ENCODE measurements at regions of chr15 and their contacts with region 1.

Region 1: DNA sequence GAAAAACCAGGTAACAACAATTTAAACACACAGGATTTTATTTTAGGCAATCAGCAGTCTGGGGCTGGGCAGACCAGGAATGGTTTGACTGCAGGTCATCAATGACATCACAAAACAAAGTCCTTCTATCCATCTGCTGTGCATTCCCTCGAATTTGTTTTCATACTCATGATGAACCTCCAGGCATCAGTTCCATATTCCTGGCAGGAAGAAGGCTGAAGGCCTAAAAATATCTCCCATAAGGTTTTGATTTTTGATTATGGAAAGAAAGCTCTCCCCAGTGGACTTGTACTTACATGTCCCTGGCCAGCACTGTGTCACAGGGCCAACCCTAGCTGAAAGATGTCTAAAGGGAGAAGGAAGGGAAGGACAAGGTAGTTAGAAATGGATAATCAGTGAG is 107.4 kb downstream of the PEAK1 start:
- DNase-seq: peak; percentile 51
- H3K4me3 ChIP-seq: no peak overlapping the region
- H3K27ac ChIP-seq: peak overlapping the region; percentile 60
- H3K4me1 ChIP-seq: peaks cover 16% of the 10 kb centered on the region
- H3K27me3 ChIP-seq: no peaks in the 10 kb centered on the region
- CTCF ChIP-seq: no peak

Region 2: GRCh38 chr15:77352887-77353286 is 40.4 kb after region 1 on chr15:
- CTCF ChIA-PET with region 1: no interaction called
- dilution Hi-C with region 1: no loop called
- in situ Hi-C with region 1: no loop called
- intact Hi-C with region 1: loop called (anchors 5 kb)
- DNase-seq: no peak
- H3K4me3 ChIP-seq: no peak overlapping the region
- H3K27ac ChIP-seq: no peak overlapping the region
- H3K4me1 ChIP-seq: peaks cover 9% of the 10 kb centered on the region
- H3K27me3 ChIP-seq: no peaks in the 10 kb centered on the region
- CTCF ChIP-seq: no peak

Region 3: GRCh38 chr15:77419836-77420609 is 107.5 kb after region 1 on chr15 and contains the start of gene PEAK1:
- CTCF ChIA-PET with region 1: no interaction called
- dilution Hi-C with region 1: no loop called
- in situ Hi-C with region 1: no loop called
- intact Hi-C with region 1: loop called (anchors 1 kb)
- DNase-seq: peak; percentile 98
- H3K4me3 ChIP-seq: peak within 1 kb of the TSS; percentile 93 to 99 (median 96)
- H3K27ac ChIP-seq: peak within 1 kb of the TSS; percentile 87
- H3K4me1 ChIP-seq: peaks cover 16% of the 10 kb centered on the region
- H3K27me3 ChIP-seq: no peaks in the 10 kb centered on the region
- CTCF ChIP-seq: no peak
- total RNA-seq, gene PEAK1: 25.5 to 27.6 TPM

Measured in mammary epithelial cell (primary cell).